Gastrocnemius medialis (tissue), 4 donors: ENCODE measurements at regions of chr1 and their contacts with region 1.

Region 1: DNA sequence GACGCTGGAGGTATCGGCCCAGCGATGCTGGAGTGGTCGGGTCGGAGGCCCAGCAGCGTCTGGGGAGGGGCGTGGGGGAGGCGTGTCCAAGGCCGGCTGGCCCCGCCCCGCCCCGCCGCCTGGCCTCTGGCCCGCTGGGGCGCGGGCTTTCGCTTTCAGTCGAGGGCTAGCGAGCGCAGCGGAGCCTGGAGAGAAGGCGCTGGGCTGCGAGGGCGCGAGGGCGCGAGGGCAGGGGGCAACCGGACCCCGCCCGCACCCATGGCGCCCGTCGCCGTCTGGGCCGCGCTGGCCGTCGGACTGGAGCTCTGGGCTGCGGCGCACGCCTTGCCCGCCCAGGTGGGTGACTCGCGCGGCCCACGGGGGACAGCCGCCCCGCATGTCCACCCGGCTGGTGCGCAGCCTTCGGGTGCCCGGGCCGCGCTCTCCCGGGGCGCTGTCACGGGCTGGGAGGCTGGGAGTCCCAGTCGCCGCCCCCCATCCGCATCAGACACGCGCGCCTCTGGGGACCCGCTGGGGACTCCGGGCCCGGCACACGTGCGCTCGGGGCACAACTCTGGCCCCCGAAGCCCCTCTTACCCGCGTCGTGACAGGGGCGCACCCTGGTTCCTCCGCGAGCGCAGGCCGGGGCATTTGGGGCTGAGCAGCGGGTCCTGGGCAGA is at the start of gene TNFRSF1B:
- DNase-seq: no peak
- ATAC-seq: peak; percentile 50 to 57
- H3K4me3 ChIP-seq: peak within 1 kb of the TSS; percentile 65 to 93 (median 73)
- H3K27ac ChIP-seq: peak within 1 kb of the TSS; percentile 72 to 85 (median 84)
- H3K4me1 ChIP-seq: peaks cover 20 to 27% of the 10 kb centered on the region in 2 donors
- H3K27me3 ChIP-seq: peaks cover 0 to 4% (median 0%) of the 10 kb centered on the region in 3 donors
- CTCF ChIP-seq: no peak
- POLR2A ChIP-seq: peak; percentile 75 to 86
- total RNA-seq, gene TNFRSF1B: 14.0 to 29.5 (median 18.8) TPM

Region 2: GRCh38 chr1:12087797-12088314 is 79.1 kb before region 1 on chr1:
- in situ Hi-C with region 1: no loop called
- intact Hi-C with region 1: no loop called
- DNase-seq: no peak
- ATAC-seq: no peak
- H3K4me3 ChIP-seq: no peak overlapping the region
- H3K27ac ChIP-seq: no peak overlapping the region
- H3K4me1 ChIP-seq: no peaks in the 10 kb centered on the region
- H3K27me3 ChIP-seq: no peaks in the 10 kb centered on the region
- CTCF ChIP-seq: no peak
- POLR2A ChIP-seq: no peak

Region 3: GRCh38 chr1:12180315-12180714 is 13.4 kb after region 1 on chr1:
- in situ Hi-C with region 1: no loop called
- intact Hi-C with region 1: loop called (anchors 2 kb)
- DNase-seq: peak; percentile 77 to 95
- ATAC-seq: peak; percentile 83 to 88
- H3K4me3 ChIP-seq: no peak overlapping the region
- H3K27ac ChIP-seq: peak overlapping the region; percentile 76 to 88 (median 86)
- H3K4me1 ChIP-seq: peaks cover 26 to 52% of the 10 kb centered on the region in 2 donors
- H3K27me3 ChIP-seq: peaks cover 0 to 2% (median 0%) of the 10 kb centered on the region in 3 donors
- CTCF ChIP-seq: no peak
- POLR2A ChIP-seq: peak in 1 of 2 donors; percentile 15